ENCODE measurements at regions of chr19 and their contacts with region 1.

Region 1: DNA sequence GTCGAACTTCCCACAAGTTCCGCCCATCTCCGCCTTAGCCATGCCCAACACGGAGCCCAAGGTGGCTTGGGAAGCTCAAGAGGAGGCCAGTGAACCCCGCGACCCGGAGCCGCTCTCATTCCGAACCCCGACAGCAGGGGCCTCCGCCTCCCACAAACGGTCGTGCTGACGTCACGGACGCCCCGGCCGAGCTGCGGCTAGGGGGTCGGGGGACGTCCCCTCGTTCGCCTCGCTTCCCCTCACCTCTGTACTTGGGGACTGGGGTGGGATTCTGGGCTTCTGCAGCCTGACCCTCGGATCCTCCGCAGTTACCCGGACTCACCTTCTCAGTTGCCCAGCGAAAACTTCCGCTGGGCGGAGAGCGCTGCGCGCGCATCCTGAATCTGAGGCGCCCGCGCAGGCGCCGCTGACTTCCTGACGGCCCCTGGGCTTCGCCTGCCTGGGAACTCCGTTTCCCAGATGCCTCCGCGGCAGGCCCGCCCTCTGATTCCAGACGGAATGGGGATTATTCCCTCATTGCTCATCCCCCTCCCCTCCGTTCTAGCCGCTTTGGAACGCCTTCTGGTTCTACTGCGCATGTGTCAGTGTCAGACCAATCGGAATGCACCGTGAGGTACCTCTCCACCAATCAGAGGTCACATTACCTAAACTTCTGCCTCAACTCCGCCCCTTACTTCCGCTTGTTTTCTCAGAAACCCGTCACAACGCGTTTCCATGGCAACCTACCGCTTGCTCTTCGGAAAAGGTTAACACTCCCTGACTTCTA is at the start of gene VRK3:
- DNase-seq: peak; percentile 99
- H3K4me3 Mint-ChIP-seq: peak within 1 kb of the TSS; percentile 89
- H3K27ac Mint-ChIP-seq: peak within 1 kb of the TSS; percentile 98
- H3K4me1 Mint-ChIP-seq: peaks cover 49% of the 10 kb centered on the region
- H3K27me3 Mint-ChIP-seq: peaks cover 3% of the 10 kb centered on the region
- total RNA-seq, gene VRK3: 54.4 to 55.8 TPM

Region 2: GRCh38 chr19:49451430-49452181 is 573.6 kb before region 1 on chr19 and contains the start of gene PIH1D1:
- CTCF ChIA-PET with region 1: no interaction called
- POLR2A ChIA-PET with region 1: no interaction called
- intact Hi-C with region 1: loop called (anchors 2 kb)
- DNase-seq: peak; percentile 98
- H3K4me3 Mint-ChIP-seq: peak within 1 kb of the TSS; percentile 100
- H3K27ac Mint-ChIP-seq: peak within 1 kb of the TSS; percentile 99
- H3K4me1 Mint-ChIP-seq: peaks cover 38% of the 10 kb centered on the region
- H3K27me3 Mint-ChIP-seq: no peaks in the 10 kb centered on the region
- total RNA-seq, gene PIH1D1: 117 to 129 TPM

Region 3: DNA sequence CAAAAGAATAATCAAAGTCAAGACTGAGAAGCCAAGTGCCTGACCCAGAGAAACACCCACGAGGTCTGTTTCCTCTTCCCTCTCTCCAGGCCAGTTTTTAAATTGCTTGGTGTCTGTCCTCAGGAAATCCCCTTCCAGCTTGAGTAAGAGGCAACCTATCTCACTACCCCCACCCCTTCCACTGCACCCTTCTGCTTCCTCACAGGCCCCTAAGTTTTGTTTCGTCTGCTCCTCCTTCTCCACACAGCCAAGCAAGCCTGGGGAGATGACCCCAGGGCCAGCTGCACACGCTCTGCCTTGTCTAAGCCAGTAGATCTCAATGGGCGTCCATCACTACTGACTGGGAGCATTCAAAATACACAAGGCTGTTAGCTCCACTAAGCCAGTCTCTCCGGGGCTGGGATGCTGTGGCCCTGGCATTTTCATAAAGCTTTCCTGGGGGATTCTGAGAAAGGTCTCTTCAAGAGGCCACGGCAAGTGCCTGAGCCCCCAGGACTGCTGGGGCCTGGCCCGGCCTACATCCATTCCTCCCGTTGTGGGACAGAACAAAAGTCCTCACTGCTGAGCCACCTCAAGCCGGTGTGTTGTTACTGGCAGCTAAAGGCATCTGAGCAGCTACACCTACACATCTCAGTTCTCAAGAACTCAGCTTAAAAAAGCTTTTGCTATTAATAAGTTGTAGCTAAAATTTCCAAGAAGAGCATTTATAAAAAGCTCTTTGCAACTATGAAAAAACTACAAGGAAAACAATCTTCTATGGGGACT is 113.6 kb before region 1 on chr19:
- CTCF ChIA-PET with region 1: no interaction called
- POLR2A ChIA-PET with region 1: no interaction called
- intact Hi-C with region 1: no loop called
- DNase-seq: peak; percentile 72
- H3K4me3 Mint-ChIP-seq: peak overlapping the region; percentile 51
- H3K27ac Mint-ChIP-seq: peak overlapping the region; percentile 97
- H3K4me1 Mint-ChIP-seq: peaks cover 78% of the 10 kb centered on the region
- H3K27me3 Mint-ChIP-seq: no peaks in the 10 kb centered on the region

Region 4: GRCh38 chr19:49929611-49930482 is 95.4 kb before region 1 on chr19:
- CTCF ChIA-PET with region 1: interaction called, 5 read pairs
- POLR2A ChIA-PET with region 1: interaction called, 9 read pairs
- intact Hi-C with region 1: loop called (anchors 1 kb)
- DNase-seq: peak; percentile 96
- H3K4me3 Mint-ChIP-seq: peak overlapping the region; percentile 98
- H3K27ac Mint-ChIP-seq: peak overlapping the region; percentile 98
- H3K4me1 Mint-ChIP-seq: peaks cover 66% of the 10 kb centered on the region
- H3K27me3 Mint-ChIP-seq: peaks cover 5% of the 10 kb centered on the region

Region 5: GRCh38 chr19:49973987-49974386 is 51.2 kb before region 1 on chr19:
- CTCF ChIA-PET with region 1: no interaction called
- POLR2A ChIA-PET with region 1: no interaction called
- intact Hi-C with region 1: no loop called
- DNase-seq: no peak
- H3K4me3 Mint-ChIP-seq: no peak overlapping the region
- H3K27ac Mint-ChIP-seq: no peak overlapping the region
- H3K4me1 Mint-ChIP-seq: no peaks in the 10 kb centered on the region
- H3K27me3 Mint-ChIP-seq: peaks cover 3% of the 10 kb centered on the region

Region 6: GRCh38 chr19:50003810-50004419 is 21.3 kb before region 1 on chr19:
- CTCF ChIA-PET with region 1: no interaction called
- POLR2A ChIA-PET with region 1: no interaction called
- intact Hi-C with region 1: loop called (anchors 1 kb)
- DNase-seq: peak; percentile 62
- H3K4me3 Mint-ChIP-seq: peak overlapping the region; percentile 7
- H3K27ac Mint-ChIP-seq: peak overlapping the region; percentile 45
- H3K4me1 Mint-ChIP-seq: peaks cover 25% of the 10 kb centered on the region
- H3K27me3 Mint-ChIP-seq: no peaks in the 10 kb centered on the region

Region 7: GRCh38 chr19:50329146-50329925 is 304.1 kb after region 1 on chr19 and contains the start of gene KCNC3:
- CTCF ChIA-PET with region 1: no interaction called
- POLR2A ChIA-PET with region 1: no interaction called
- intact Hi-C with region 1: loop called (anchors 10 kb)
- DNase-seq: peak; percentile 100
- H3K4me3 Mint-ChIP-seq: peak within 1 kb of the TSS; percentile 82
- H3K27ac Mint-ChIP-seq: peak within 1 kb of the TSS; percentile 88
- H3K4me1 Mint-ChIP-seq: peaks cover 67% of the 10 kb centered on the region
- H3K27me3 Mint-ChIP-seq: peaks cover 49% of the 10 kb centered on the region
- total RNA-seq, gene KCNC3: 5.4 to 6.2 TPM

Region 8: GRCh38 chr19:50449236-50449899 is 424.2 kb after region 1 on chr19:
- CTCF ChIA-PET with region 1: no interaction called
- POLR2A ChIA-PET with region 1: no interaction called
- intact Hi-C with region 1: no loop called
- DNase-seq: no peak
- H3K4me3 Mint-ChIP-seq: no peak overlapping the region
- H3K27ac Mint-ChIP-seq: no peak overlapping the region
- H3K4me1 Mint-ChIP-seq: no peaks in the 10 kb centered on the region
- H3K27me3 Mint-ChIP-seq: peaks cover 6% of the 10 kb centered on the region